ENCODE measurements at regions of chr5 and their contacts with region 1.

Region 1: GRCh38 chr5:81006947-81007636 is 46.9 kb downstream of the RASGRF2 start:
- DNase-seq: peak in 13 of 14 experiments; percentile 15 to 91 (median 57)
- ATAC-seq: peak; percentile 89
- H3K4me3 ChIP-seq: peak overlapping the region; percentile 50
- H3K4me3 Mint-ChIP-seq: peak overlapping the region; percentile 87
- H3K27ac ChIP-seq: peak overlapping the region; percentile 78 to 91
- H3K27ac Mint-ChIP-seq: peak overlapping the region; percentile 92
- H3K4me1 ChIP-seq: peaks cover 60% of the 10 kb centered on the region
- H3K4me1 Mint-ChIP-seq: peaks cover 86% of the 10 kb centered on the region
- H3K27me3 ChIP-seq: no peaks in the 10 kb centered on the region
- H3K27me3 Mint-ChIP-seq: no peaks in the 10 kb centered on the region
- CTCF ChIP-seq: no peak

Region 2: GRCh38 chr5:81017320-81017719 is 10.2 kb after region 1 on chr5:
- CTCF ChIA-PET with region 1: interaction called, 4 read pairs
- POLR2A ChIA-PET with region 1: interaction called, 14 read pairs
- intact Hi-C with region 1: no loop called
- DNase-seq: no peak
- ATAC-seq: no peak
- H3K4me3 ChIP-seq: no peak overlapping the region
- H3K4me3 Mint-ChIP-seq: no peak overlapping the region
- H3K27ac ChIP-seq: no peak overlapping the region
- H3K27ac Mint-ChIP-seq: peak overlapping the region; percentile 85
- H3K4me1 ChIP-seq: peaks cover 46% of the 10 kb centered on the region
- H3K4me1 Mint-ChIP-seq: peaks cover 90% of the 10 kb centered on the region
- H3K27me3 ChIP-seq: no peaks in the 10 kb centered on the region
- H3K27me3 Mint-ChIP-seq: no peaks in the 10 kb centered on the region
- CTCF ChIP-seq: no peak